ENCODE measurements at regions of chr22 and their contacts with region 1.

Region 1: DNA sequence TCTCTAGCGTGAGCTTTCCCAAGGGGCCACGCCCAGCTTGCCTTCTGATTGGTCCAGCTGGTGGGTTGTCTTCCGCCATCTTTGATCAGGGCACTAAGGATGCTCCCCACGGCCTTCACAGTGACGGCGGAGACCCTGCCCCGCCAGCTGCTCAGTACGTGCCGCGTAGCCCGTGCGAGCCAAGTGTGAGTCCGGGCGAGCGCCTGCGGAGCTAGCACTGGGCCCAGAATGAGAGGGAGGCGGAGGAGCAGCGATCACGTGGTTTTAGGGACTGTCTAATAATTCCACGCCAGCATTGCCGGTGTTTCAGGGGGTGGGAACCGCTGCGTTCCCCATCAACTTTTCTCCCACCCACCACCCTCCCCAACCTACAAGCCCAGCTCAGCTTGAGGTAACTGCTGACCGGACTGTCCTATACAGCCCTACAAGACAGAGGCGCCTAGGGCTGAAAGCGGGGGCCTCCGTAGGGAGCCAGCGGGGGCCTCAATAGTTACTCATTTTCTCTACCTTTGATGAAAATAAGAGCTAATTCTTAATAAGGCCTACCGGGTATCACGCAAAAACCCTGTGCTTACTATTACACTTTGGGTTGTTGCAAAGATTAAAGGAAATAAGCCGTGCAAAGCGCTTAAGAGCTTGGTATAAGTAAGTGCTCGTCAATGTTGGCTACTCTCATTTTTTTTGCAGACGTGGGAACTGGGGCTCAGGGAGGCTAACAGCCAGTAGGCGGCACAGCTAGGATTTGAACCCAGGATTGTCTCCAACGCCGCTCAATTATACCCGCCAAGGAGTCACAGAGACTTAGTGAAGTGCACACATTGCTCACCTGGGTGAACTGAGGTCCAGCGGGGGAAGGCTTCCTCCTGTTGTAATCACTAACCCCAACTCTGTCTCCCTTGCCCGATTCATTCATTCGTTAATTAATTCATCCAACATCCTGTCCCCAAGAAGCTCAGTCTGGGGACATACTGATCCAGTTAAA is 1.3 kb upstream of the MTFP1 start:
- DNase-seq: peak; percentile 100
- H3K4me3 Mint-ChIP-seq: peak overlapping the region; percentile 90
- H3K27ac Mint-ChIP-seq: peak overlapping the region; percentile 97
- H3K4me1 Mint-ChIP-seq: peaks cover 44% of the 10 kb centered on the region
- H3K27me3 Mint-ChIP-seq: no peaks in the 10 kb centered on the region
- CTCF ChIP-seq: peak; percentile 10

Region 2: DNA sequence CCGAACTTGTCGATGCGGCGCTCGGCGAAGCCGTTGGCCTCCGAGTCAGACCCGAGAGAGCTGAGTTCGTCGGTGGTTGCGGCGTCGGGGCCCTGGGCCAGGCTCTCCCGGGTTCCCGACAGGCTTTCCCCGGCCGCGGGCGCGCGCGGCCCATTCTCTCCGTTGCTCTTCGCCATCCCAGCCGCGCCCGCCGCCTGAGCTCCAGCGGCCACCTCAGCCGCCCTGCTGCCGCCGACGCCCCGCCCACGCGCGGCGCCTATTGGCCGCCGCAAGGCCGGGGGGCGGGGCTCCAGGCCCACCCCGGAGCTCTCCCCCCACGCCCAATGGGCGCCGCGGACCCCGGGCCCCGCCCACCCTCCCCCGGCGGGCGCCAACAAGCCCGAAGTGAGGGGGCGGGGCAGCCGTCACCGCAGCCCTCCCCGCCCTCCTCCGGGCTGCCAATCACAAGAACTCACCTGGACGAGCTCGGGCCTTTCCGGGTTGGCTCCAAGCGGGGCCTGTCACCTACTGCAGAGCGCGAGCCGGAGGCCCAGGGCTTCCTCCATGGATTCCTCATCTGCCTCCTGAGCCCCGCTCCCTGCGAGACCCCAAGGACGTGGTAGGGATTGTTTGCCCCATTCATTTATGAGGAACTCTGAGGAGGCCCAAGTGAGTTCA is 97.4 kb before region 1 on chr22 and contains the start of gene TBC1D10A:
- CTCF ChIA-PET with region 1: no interaction called
- POLR2A ChIA-PET with region 1: interaction called, 23 read pairs
- intact Hi-C with region 1: no loop called
- DNase-seq: peak; percentile 92
- H3K4me3 Mint-ChIP-seq: peak within 1 kb of the TSS; percentile 71
- H3K27ac Mint-ChIP-seq: peak within 1 kb of the TSS; percentile 86
- H3K4me1 Mint-ChIP-seq: peaks cover 23% of the 10 kb centered on the region
- H3K27me3 Mint-ChIP-seq: no peaks in the 10 kb centered on the region
- CTCF ChIP-seq: no peak
- total RNA-seq, gene TBC1D10A: 11.1 and 13.1 TPM in 2 replicates

Region 3: DNA sequence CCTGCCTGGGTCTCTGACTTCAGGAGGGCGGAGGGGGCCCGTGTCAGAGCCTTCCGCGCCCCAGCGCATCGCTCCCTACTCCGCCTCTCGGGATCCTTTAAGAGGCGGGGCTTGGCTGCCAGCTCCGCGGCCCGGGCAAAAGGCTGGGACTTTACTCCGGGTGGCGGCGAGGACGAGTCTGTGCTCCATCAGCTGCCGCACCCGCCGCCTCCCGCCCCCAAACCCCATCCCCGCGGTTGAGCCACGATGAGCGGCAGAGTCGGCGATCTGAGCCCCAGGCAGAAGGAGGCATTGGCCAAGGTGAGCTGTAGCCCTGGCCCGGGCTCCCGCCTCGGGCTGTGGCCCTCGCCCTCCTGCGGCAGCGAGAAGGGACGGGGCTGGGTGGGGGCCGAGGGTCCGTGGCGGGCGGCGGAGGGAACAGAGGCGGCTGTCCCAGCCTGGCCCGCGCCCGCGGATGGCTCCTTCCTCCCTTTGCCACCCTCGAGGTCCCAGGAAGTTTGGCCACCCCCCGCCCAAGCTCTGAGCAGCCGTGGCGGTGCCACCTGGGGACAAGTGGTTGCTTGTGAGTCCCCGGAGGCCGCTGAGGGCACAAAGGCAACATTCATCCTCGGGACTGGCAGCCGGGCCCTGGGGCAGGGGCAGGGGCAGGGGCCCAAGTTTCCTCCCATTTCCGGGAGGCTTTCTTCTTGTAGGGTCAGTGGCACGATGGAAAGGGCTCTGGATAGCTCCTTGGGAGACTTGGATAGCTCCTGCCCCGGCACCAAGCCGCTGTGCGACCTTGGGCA is 27.2 kb before region 1 on chr22 and contains the start of gene SEC14L2:
- CTCF ChIA-PET with region 1: interaction called, 83 read pairs
- POLR2A ChIA-PET with region 1: interaction called, 532 read pairs
- intact Hi-C with region 1: loop called (anchors 1 kb)
- DNase-seq: peak; percentile 72
- H3K4me3 Mint-ChIP-seq: peak within 1 kb of the TSS; percentile 85
- H3K27ac Mint-ChIP-seq: peak within 1 kb of the TSS; percentile 81
- H3K4me1 Mint-ChIP-seq: peaks cover 29% of the 10 kb centered on the region
- H3K27me3 Mint-ChIP-seq: no peaks in the 10 kb centered on the region
- CTCF ChIP-seq: no peak
- total RNA-seq, gene SEC14L2: 20.0 and 29.1 TPM in 2 replicates

Region 4: GRCh38 chr22:30408414-30409104 is 15.7 kb before region 1 on chr22:
- CTCF ChIA-PET with region 1: interaction called, 59 read pairs
- POLR2A ChIA-PET with region 1: interaction called, 532 read pairs
- intact Hi-C with region 1: loop called (anchors 1 kb)
- DNase-seq: peak; percentile 92
- H3K4me3 Mint-ChIP-seq: no peak overlapping the region
- H3K27ac Mint-ChIP-seq: peak overlapping the region; percentile 73
- H3K4me1 Mint-ChIP-seq: peaks cover 47% of the 10 kb centered on the region
- H3K27me3 Mint-ChIP-seq: no peaks in the 10 kb centered on the region
- CTCF ChIP-seq: no peak